ENCODE measurements at regions of chr20 and their contacts with region 1.

Region 1: GRCh38 chr20:38805502-38805957 is at the start of gene PPP1R16B:
- DNase-seq: peak in 9 of 10 donors; percentile 73 to 86 (median 80)
- ATAC-seq: peak; percentile 68 to 72
- H3K4me3 Mint-ChIP-seq: peak within 1 kb of the TSS; percentile 85 to 96 (median 90)
- H3K27ac Mint-ChIP-seq: peak within 1 kb of the TSS; percentile 94 to 99 (median 96)
- H3K4me1 Mint-ChIP-seq: peaks cover 28 to 60% (median 58%) of the 10 kb centered on the region in 4 donors
- H3K27me3 Mint-ChIP-seq: peaks cover 0 to 2% (median 0%) of the 10 kb centered on the region in 5 donors
- polyA plus RNA-seq, gene PPP1R16B: 9.7 to 15.6 (median 13.4) TPM

Region 2: GRCh38 chr20:38748097-38748860 is 57.3 kb before region 1 on chr20 and contains the start of gene ACTR5:
- POLR2A ChIA-PET with region 1: interaction called, 17 read pairs
- DNase-seq: peak; percentile 93 to 99 (median 98)
- ATAC-seq: peak; percentile 85 to 88
- H3K4me3 Mint-ChIP-seq: peak within 1 kb of the TSS; percentile 88 to 99 (median 98)
- H3K27ac Mint-ChIP-seq: peak within 1 kb of the TSS; percentile 92 to 100 (median 100)
- H3K4me1 Mint-ChIP-seq: peaks cover 14 to 34% (median 27%) of the 10 kb centered on the region in 4 donors
- H3K27me3 Mint-ChIP-seq: peaks cover 0 to 9% (median 4%) of the 10 kb centered on the region in 5 donors
- polyA plus RNA-seq, gene ACTR5: 8.8 to 10.3 (median 10.2) TPM

Region 3: GRCh38 chr20:38825901-38826625 is 20.5 kb after region 1 on chr20:
- POLR2A ChIA-PET with region 1: interaction called, 14 read pairs
- DNase-seq: no peak
- ATAC-seq: no peak
- H3K4me3 Mint-ChIP-seq: no peak overlapping the region
- H3K27ac Mint-ChIP-seq: peak overlapping the region; percentile 36 to 86 (median 68)
- H3K4me1 Mint-ChIP-seq: peaks cover 35 to 89% (median 70%) of the 10 kb centered on the region in 4 donors
- H3K27me3 Mint-ChIP-seq: no peaks in the 10 kb centered on the region

Region 4: GRCh38 chr20:38875175-38875993 is 69.9 kb after region 1 on chr20:
- POLR2A ChIA-PET with region 1: interaction called, 105 read pairs
- DNase-seq: peak; percentile 28 to 82 (median 66)
- ATAC-seq: peak; percentile 72 to 76
- H3K4me3 Mint-ChIP-seq: peak overlapping the region; percentile 79 to 91 (median 84)
- H3K27ac Mint-ChIP-seq: peak overlapping the region; percentile 94 to 100 (median 98)
- H3K4me1 Mint-ChIP-seq: peaks cover 47 to 96% (median 83%) of the 10 kb centered on the region in 4 donors
- H3K27me3 Mint-ChIP-seq: no peaks in the 10 kb centered on the region

Region 5: DNA sequence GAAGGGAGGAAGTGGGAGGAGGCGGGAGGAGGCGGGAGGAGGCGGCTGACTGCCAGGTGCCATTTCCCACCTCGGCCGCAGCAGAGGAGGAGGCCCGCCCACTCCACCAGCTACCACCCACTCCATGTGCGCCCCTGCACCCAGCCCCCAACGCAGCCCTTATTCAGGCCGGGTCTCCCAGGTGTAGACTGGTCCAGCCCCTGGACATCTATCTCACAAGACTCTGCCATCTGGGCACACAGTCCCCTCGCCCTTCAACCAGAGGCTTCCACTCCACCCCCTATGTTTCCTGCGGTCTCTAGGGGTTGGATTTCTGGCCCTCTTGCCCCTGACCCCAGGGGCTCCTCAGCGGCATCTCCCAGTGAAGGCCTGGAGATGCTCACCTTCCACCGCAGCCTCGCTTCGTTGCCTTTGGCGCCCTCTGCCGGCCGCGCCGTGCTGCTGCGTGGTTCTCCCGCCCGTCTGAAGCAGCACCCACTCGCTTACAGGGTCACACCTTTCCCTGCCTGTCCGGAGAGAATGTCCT is 88.1 kb after region 1 on chr20:
- POLR2A ChIA-PET with region 1: interaction called, 12 read pairs
- DNase-seq: peak; percentile 60 to 83 (median 79)
- ATAC-seq: peak; percentile 94 to 97
- H3K4me3 Mint-ChIP-seq: peak overlapping the region; percentile 1 to 66 (median 60)
- H3K27ac Mint-ChIP-seq: peak overlapping the region; percentile 57 to 96 (median 92)
- H3K4me1 Mint-ChIP-seq: peaks cover 17 to 44% (median 26%) of the 10 kb centered on the region in 4 donors
- H3K27me3 Mint-ChIP-seq: no peaks in the 10 kb centered on the region